Vagina (tissue), 2 donors: ENCODE measurements at regions of chr16 and their contacts with region 1.

Region 1: DNA sequence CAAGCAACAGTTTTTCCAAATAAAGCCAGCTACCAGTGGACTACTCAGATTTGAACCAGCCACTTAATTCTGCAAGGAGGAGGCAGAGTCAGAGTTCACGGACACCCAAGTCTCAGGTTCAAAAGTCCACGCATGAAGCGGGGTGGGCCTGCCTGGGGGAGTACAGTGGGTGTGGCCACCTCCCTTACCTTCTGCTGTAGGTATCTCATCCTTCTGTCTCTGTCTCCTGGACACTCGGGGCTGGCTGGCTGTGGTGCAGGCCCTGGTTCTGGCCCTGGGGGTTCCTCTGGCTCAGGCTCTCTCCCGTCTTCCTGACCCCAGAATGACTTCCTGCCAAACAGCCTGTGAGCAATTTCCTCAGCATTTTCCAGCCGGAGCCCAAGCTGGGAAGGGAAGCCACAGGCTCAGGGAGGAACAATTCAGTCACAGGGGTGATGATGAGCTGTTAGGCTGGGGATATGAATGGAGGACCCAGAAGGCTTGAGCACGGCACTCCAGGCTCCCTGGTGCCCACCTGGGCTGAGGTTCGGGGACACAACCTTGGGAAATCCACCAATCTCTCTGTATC is 101.9 kb downstream of the LITAF start:
- DNase-seq: no peak
- H3K4me3 ChIP-seq: no peak overlapping the region
- H3K27ac ChIP-seq: no peak overlapping the region
- H3K4me1 ChIP-seq: no peaks in the 10 kb centered on the region
- H3K27me3 ChIP-seq: no peaks in the 10 kb centered on the region
- CTCF ChIP-seq: no peak
- POLR2A ChIP-seq: no peak

Region 2: GRCh38 chr16:11232852-11233726 is 251.7 kb before region 1 on chr16:
- intact Hi-C with region 1: no loop called
- DNase-seq: no peak
- H3K4me3 ChIP-seq: no peak overlapping the region
- H3K27ac ChIP-seq: peak overlapping the region; percentile 9
- H3K4me1 ChIP-seq: peaks cover 7% of the 10 kb centered on the region
- H3K27me3 ChIP-seq: no peaks in the 10 kb centered on the region
- CTCF ChIP-seq: no peak
- POLR2A ChIP-seq: no peak

Region 3: DNA sequence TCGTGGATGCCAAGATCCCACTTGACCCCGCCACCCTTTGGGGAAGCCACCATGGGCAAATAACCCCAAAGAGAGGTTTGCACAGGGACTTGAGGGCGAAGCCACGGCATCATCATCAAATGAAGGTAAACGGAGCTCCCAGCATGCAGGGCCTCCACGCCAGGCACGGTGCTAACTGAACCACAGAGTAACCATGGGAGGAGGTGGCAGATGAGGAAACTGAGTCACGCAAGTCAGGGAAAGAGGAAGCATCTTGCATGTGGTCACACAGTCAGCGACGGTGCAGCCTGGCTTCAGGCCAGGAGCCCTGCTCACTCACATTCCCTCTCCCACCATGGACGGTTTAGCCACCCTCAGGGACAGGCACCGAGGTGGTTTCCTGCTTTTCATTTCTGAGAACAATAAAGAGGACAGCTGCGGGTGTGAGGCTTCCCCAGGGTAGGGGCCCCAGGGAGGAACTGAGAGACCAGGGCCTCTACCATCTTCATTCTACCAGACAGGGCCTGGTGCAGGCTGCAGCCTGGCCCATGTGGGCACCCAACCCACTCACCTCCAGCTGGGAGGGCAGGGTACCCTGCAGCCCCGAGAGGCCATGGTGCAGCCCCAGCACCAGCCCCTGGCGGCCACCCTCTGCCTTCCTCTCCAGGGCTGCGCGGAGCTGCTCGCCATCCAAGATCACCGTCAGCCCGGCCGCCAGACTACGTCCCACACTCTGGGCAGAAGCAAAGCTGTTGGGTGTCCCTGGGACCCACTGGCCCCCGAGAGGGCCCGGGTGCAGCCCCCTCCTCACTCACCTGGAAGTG is 61.3 kb before region 1 on chr16:
- intact Hi-C with region 1: loop called (anchors 10 kb)
- DNase-seq: no peak
- H3K4me3 ChIP-seq: no peak overlapping the region
- H3K27ac ChIP-seq: no peak overlapping the region
- H3K4me1 ChIP-seq: no peaks in the 10 kb centered on the region
- H3K27me3 ChIP-seq: no peaks in the 10 kb centered on the region
- CTCF ChIP-seq: no peak
- POLR2A ChIP-seq: no peak

Region 4: GRCh38 chr16:11546608-11547061 is 61.9 kb after region 1 on chr16:
- intact Hi-C with region 1: no loop called
- DNase-seq: no peak
- H3K4me3 ChIP-seq: no peak overlapping the region
- H3K27ac ChIP-seq: peak overlapping the region; percentile 86
- H3K4me1 ChIP-seq: peaks cover 20% of the 10 kb centered on the region
- H3K27me3 ChIP-seq: no peaks in the 10 kb centered on the region
- CTCF ChIP-seq: no peak
- POLR2A ChIP-seq: no peak